ENCODE measurements at regions of chr11 and their contacts with region 1.

Region 1: GRCh38 chr11:279966-280582 is 1.9 kb downstream of the NLRP6 start:
- DNase-seq: peak in 2 of 5 donors; percentile 47 to 71
- H3K4me3 ChIP-seq: peak overlapping the region; percentile 50
- H3K4me3 Mint-ChIP-seq: peak overlapping the region; percentile 77 to 91 (median 84)
- H3K27ac ChIP-seq: no peak overlapping the region
- H3K27ac Mint-ChIP-seq: peak overlapping the region in 5 of 8 donors; percentile 19 to 85 (median 54)
- H3K4me1 ChIP-seq: peaks cover 47% of the 10 kb centered on the region
- H3K4me1 Mint-ChIP-seq: peaks cover 42 to 58% (median 50%) of the 10 kb centered on the region in 3 donors
- H3K27me3 ChIP-seq: no peaks in the 10 kb centered on the region
- H3K27me3 Mint-ChIP-seq: no peaks in the 10 kb centered on the region

Region 2: GRCh38 chr11:236774-237767 is 43.0 kb before region 1 on chr11 and contains the start of gene PSMD13:
- CTCF ChIA-PET with region 1: interaction called, 13 read pairs
- POLR2A ChIA-PET with region 1: interaction called, 11 read pairs
- DNase-seq: peak; percentile 83 to 91 (median 88)
- H3K4me3 ChIP-seq: peak within 1 kb of the TSS; percentile 95
- H3K4me3 Mint-ChIP-seq: peak within 1 kb of the TSS; percentile 95 to 100 (median 97)
- H3K27ac ChIP-seq: peak within 1 kb of the TSS; percentile 100
- H3K27ac Mint-ChIP-seq: peak within 1 kb of the TSS; percentile 98 to 100 (median 100)
- H3K4me1 ChIP-seq: peaks cover 24% of the 10 kb centered on the region
- H3K4me1 Mint-ChIP-seq: peaks cover 39 to 71% (median 53%) of the 10 kb centered on the region in 3 donors
- H3K27me3 ChIP-seq: no peaks in the 10 kb centered on the region
- H3K27me3 Mint-ChIP-seq: peaks cover 0 to 4% of the 10 kb centered on the region in 2 donors
- total RNA-seq, gene PSMD13: 235 to 237 TPM

Region 3: GRCh38 chr11:269146-269890 is 10.8 kb before region 1 on chr11:
- CTCF ChIA-PET with region 1: interaction called, 49 read pairs
- POLR2A ChIA-PET with region 1: interaction called, 71 read pairs
- DNase-seq: peak; percentile 24 to 88 (median 72)
- H3K4me3 ChIP-seq: peak overlapping the region; percentile 49
- H3K4me3 Mint-ChIP-seq: peak overlapping the region; percentile 84 to 94 (median 90)
- H3K27ac ChIP-seq: peak overlapping the region; percentile 78
- H3K27ac Mint-ChIP-seq: peak overlapping the region; percentile 89 to 100 (median 96)
- H3K4me1 ChIP-seq: peaks cover 22% of the 10 kb centered on the region
- H3K4me1 Mint-ChIP-seq: peaks cover 30 to 43% (median 31%) of the 10 kb centered on the region in 3 donors
- H3K27me3 ChIP-seq: no peaks in the 10 kb centered on the region
- H3K27me3 Mint-ChIP-seq: peaks cover 0 to 2% of the 10 kb centered on the region in 2 donors

Region 4: DNA sequence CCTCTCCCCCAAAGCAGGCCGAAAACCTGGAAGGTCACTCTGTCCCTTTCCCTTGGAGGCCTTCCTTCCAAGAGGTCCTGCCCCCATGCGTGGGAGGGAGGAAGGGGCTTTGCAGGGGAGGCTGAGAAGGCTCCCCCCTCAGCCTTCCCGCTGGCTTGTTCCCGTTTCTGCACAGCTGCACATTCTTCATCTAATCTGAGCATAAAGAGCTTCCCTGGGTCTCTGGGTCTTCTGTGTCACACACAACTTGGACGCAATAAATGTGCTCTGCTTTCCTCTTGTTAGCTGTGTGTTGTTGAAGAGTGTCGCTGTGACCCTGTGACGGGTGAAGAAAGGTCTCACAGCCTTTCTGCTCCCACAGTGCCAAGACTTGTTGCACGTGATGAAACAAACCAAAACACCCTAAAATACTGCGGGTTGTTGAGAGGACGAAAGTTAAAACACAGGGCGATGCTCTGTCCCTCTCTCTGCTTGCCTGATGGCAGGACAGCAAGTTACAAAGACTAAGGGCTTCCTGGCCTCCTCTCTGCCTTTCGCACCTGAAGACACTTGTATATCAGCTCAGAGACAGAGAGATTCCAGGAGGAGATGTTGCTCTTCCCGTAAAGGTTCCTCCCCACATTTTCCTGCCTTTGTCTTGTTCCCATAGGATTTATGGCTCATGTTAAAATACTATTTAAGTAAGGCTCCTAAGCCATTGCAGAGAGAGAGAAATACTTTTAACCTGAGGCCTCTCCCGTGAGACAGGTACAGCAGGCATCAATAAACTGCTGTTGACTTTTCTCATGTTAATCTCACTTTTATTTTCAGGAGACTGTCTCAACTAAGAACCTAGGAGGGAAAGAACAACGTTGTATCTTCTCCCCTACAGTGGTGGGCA is 55.9 kb after region 1 on chr11:
- CTCF ChIA-PET with region 1: no interaction called
- POLR2A ChIA-PET with region 1: no interaction called
- DNase-seq: no peak
- H3K4me3 ChIP-seq: no peak overlapping the region
- H3K4me3 Mint-ChIP-seq: no peak overlapping the region
- H3K27ac ChIP-seq: no peak overlapping the region
- H3K27ac Mint-ChIP-seq: peak overlapping the region in 3 of 8 donors; percentile 7 to 59 (median 58)
- H3K4me1 ChIP-seq: peaks cover 25% of the 10 kb centered on the region
- H3K4me1 Mint-ChIP-seq: peaks cover 23 to 29% (median 26%) of the 10 kb centered on the region in 3 donors
- H3K27me3 ChIP-seq: no peaks in the 10 kb centered on the region
- H3K27me3 Mint-ChIP-seq: peaks cover 0 to 1% of the 10 kb centered on the region in 2 donors

Measured in CD8-positive, alpha-beta memory T cell (primary cell).